AG04449 (cell line): ENCODE measurements at regions of chr2 and their contacts with region 1.

Region 1: DNA sequence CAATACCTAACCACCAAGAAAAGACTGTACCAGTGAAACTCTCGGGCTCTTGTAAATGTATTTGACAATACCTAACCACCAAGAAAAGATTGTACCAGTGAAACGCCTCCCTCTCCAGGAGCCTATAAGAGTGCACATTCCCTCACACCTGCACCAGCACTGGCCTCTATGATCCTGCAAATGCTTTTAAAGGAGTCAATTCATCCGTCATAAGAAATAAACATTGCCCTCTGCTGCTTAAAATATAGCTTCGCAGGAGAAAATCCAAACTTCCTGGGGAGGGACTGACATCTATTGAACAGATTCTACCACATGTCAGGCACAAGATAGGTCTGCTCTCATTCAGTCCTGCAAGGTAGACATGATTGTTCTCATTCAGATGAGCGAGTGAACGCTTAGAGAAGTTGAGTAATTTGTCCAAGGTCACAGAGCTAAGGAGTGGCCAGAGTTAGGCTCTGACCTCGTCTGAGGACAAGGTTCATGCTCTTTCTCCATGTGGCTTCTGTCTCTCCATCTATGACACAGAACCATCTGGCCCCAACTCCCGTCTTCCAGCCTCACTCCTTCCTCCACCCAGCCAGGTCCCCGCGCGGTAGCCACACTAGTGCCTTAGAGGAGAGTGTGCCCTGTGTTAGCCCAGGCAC is 38.7 kb downstream of the MCFD2 start:
- DNase-seq: no peak
- H3K4me3 ChIP-seq: no peak overlapping the region
- CTCF ChIP-seq: peak; percentile 19

Region 2: GRCh38 chr2:46863295-46864281 is 13.3 kb before region 1 on chr2:
- CTCF ChIA-PET with region 1: interaction called, 42 read pairs
- POLR2A ChIA-PET with region 1: interaction called, 8 read pairs
- DNase-seq: no peak
- H3K4me3 ChIP-seq: no peak overlapping the region
- CTCF ChIP-seq: no peak

Region 3: DNA sequence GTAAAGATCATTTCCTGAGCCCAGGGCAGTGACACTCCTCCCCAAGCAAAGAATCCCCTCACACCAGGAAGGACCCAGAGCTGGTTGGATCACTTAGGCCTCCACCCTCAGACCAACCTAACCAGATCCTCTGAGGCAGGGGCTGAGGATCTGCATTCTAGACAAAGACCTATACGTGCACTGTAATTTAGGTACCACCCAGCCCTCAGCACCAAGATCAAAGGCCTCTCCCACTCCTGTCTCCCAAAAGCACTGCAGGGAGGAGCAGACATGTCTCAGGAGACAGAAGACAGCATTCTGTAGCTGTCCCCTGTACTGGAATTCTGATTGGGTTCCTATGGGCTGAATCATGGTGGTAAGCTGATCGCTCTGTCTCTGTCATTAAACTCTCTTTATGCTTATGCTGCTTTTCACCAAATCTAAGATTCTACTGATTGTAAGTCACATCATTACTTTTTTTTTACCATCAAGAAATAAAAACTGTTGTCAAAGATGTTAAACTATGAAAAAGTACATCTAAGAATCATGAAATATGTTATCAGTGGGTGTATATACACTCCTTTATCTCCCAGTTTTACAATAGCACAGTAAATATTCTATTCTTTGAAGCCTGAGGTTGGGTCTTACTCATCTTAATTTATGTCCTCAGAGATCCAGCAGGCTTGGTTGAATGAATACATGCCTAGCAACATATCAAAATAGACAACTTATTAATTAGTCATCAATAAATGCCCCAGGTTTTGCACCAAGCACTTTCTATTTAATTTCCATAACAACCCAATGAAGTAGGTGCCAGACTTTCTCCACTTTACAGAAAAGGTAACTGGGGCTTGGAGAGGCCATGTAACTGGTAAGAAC is 10.4 kb after region 1 on chr2:
- CTCF ChIA-PET with region 1: interaction called, 52 read pairs
- POLR2A ChIA-PET with region 1: no interaction called
- DNase-seq: no peak
- H3K4me3 ChIP-seq: no peak overlapping the region
- CTCF ChIP-seq: no peak

Region 4: DNA sequence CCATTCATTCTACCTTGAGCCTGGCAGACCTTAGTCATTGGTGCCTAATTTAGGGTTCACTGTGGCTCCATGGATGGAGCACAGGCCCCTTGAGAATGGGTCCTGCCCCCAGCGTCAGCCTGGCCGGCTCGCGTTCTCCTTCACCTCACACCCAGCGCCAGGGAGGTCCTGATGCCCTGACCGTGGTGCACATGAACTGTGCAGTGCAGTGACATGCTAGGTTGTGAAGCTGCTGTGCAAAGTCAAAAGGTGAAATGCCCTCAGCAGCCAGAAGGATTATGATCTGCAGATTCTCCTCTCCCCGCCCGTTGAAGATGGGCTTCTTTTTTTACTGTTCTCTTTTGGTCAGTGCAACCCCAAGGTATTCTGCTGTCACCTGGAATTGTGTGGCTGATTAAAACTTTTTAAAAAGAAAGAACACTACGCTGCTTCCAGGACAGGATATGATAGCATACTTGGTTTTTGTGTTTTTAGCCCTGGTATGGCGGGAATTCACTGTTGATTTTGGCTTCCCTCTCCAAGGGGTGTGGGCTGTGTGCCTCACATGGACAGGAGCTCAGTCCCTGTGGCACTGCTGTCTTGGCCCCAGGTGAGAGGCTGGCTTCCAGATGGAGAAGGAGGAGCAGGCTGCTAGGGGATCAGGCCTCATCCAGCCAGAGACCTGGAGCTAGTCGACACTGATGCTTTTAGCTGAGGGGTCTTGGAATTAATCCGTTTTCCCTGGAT is 88.1 kb after region 1 on chr2:
- CTCF ChIA-PET with region 1: no interaction called
- POLR2A ChIA-PET with region 1: no interaction called
- DNase-seq: no peak
- H3K4me3 ChIP-seq: no peak overlapping the region
- CTCF ChIP-seq: no peak